ENCODE measurements at regions of chr3 and their contacts with region 1.

Region 1: GRCh38 chr3:171566803-171567422 is 106.7 kb upstream of the TNIK start:
- DNase-seq: peak in 1 of 2 experiments; percentile 39
- H3K4me3 ChIP-seq: no peak overlapping the region
- H3K4me3 Mint-ChIP-seq: no peak overlapping the region
- H3K27ac Mint-ChIP-seq: no peak overlapping the region
- H3K4me1 ChIP-seq: peaks cover 10% of the 10 kb centered on the region
- H3K4me1 Mint-ChIP-seq: no peaks in the 10 kb centered on the region
- H3K27me3 ChIP-seq: no peaks in the 10 kb centered on the region
- H3K27me3 Mint-ChIP-seq: no peaks in the 10 kb centered on the region
- CTCF ChIP-seq: peak; percentile 70 to 74

Region 2: DNA sequence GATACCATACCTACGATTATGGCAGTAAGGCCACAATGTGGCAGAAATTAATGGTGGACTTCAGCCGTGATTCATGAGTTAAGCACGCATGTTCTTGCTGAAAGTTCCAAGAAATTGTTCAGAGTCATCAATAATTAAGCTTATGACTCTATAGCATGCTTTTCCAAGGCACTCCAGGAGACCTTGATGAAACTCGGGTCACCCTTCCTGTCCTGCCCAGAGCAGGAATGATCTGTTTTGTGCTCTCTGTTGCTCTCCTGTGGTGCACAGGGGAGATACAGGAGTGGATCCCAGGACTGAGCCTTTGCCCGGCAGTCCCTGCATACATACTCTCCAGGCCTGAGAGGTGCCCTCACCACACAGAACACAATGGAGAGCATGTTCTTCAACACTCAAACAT is 398.8 kb before region 1 on chr3:
- CTCF ChIA-PET with region 1: no interaction called
- POLR2A ChIA-PET with region 1: no interaction called
- intact Hi-C with region 1: loop called (anchors 5 kb)
- DNase-seq: peak; percentile 52 to 68
- H3K4me3 ChIP-seq: no peak overlapping the region
- H3K4me3 Mint-ChIP-seq: no peak overlapping the region
- H3K27ac Mint-ChIP-seq: no peak overlapping the region
- H3K4me1 ChIP-seq: peaks cover 48% of the 10 kb centered on the region
- H3K4me1 Mint-ChIP-seq: peaks cover 17% of the 10 kb centered on the region
- H3K27me3 ChIP-seq: no peaks in the 10 kb centered on the region
- H3K27me3 Mint-ChIP-seq: no peaks in the 10 kb centered on the region
- CTCF ChIP-seq: peak; percentile 34 to 49

Region 3: GRCh38 chr3:171187706-171188290 is 379.1 kb before region 1 on chr3:
- CTCF ChIA-PET with region 1: interaction called, 4 read pairs
- POLR2A ChIA-PET with region 1: no interaction called
- intact Hi-C with region 1: loop called (anchors 1 kb)
- DNase-seq: peak in 1 of 2 experiments; percentile 45
- H3K4me3 ChIP-seq: no peak overlapping the region
- H3K4me3 Mint-ChIP-seq: no peak overlapping the region
- H3K27ac Mint-ChIP-seq: no peak overlapping the region
- H3K4me1 ChIP-seq: peaks cover 22% of the 10 kb centered on the region
- H3K4me1 Mint-ChIP-seq: peaks cover 13% of the 10 kb centered on the region
- H3K27me3 ChIP-seq: no peaks in the 10 kb centered on the region
- H3K27me3 Mint-ChIP-seq: no peaks in the 10 kb centered on the region
- CTCF ChIP-seq: peak; percentile 59

Region 4: GRCh38 chr3:171407759-171408158 is 159.2 kb before region 1 on chr3:
- CTCF ChIA-PET with region 1: no interaction called
- POLR2A ChIA-PET with region 1: no interaction called
- intact Hi-C with region 1: no loop called
- DNase-seq: no peak
- H3K4me3 ChIP-seq: no peak overlapping the region
- H3K4me3 Mint-ChIP-seq: no peak overlapping the region
- H3K27ac Mint-ChIP-seq: no peak overlapping the region
- H3K4me1 ChIP-seq: peaks cover 16% of the 10 kb centered on the region
- H3K4me1 Mint-ChIP-seq: peaks cover 19% of the 10 kb centered on the region
- H3K27me3 ChIP-seq: no peaks in the 10 kb centered on the region
- H3K27me3 Mint-ChIP-seq: no peaks in the 10 kb centered on the region
- CTCF ChIP-seq: no peak

Region 5: GRCh38 chr3:171729452-171730334 is 162.8 kb after region 1 on chr3:
- CTCF ChIA-PET with region 1: no interaction called
- POLR2A ChIA-PET with region 1: no interaction called
- intact Hi-C with region 1: no loop called
- DNase-seq: no peak
- H3K4me3 ChIP-seq: no peak overlapping the region
- H3K4me3 Mint-ChIP-seq: no peak overlapping the region
- H3K27ac Mint-ChIP-seq: no peak overlapping the region
- H3K4me1 ChIP-seq: no peaks in the 10 kb centered on the region
- H3K4me1 Mint-ChIP-seq: no peaks in the 10 kb centered on the region
- H3K27me3 ChIP-seq: no peaks in the 10 kb centered on the region
- H3K27me3 Mint-ChIP-seq: no peaks in the 10 kb centered on the region
- CTCF ChIP-seq: no peak